ENCODE measurements at regions of chr15 and their contacts with region 1.

Region 1: DNA sequence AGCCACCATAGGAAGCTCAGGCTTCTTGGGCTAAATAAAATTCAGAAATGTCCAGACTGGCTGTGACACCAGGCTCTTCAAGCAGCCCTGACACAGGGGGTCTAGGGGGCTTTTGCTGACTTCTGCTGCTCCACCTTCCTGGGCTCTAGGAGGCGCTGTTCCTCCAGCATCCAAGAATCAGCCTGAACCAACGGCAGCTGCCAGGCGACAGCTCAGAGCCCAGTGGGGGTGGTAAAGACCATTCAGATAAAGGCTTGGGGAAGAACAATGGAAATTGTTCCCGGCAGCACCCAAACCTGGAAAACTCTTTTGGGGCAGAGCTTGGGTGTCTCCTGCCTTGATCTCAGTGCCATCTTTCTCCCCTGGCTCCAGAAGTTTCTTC is 21.6 kb upstream of the PSTPIP1 start:
- DNase-seq: peak; percentile 81
- ATAC-seq: peak; percentile 61
- H3K4me3 Mint-ChIP-seq: no peak overlapping the region
- H3K27ac Mint-ChIP-seq: peak overlapping the region; percentile 61
- H3K4me1 Mint-ChIP-seq: peaks cover 37% of the 10 kb centered on the region
- H3K27me3 Mint-ChIP-seq: no peaks in the 10 kb centered on the region

Region 2: GRCh38 chr15:76987926-76988860 is 14.8 kb after region 1 on chr15:
- CTCF ChIA-PET with region 1: interaction called, 82 read pairs
- POLR2A ChIA-PET with region 1: no interaction called
- DNase-seq: peak; percentile 74
- ATAC-seq: peak; percentile 72
- H3K4me3 Mint-ChIP-seq: peak overlapping the region; percentile 60
- H3K27ac Mint-ChIP-seq: peak overlapping the region; percentile 94
- H3K4me1 Mint-ChIP-seq: peaks cover 66% of the 10 kb centered on the region
- H3K27me3 Mint-ChIP-seq: no peaks in the 10 kb centered on the region

Region 3: GRCh38 chr15:77024271-77025082 is 51.1 kb after region 1 on chr15:
- CTCF ChIA-PET with region 1: interaction called, 159 read pairs
- POLR2A ChIA-PET with region 1: interaction called, 6 read pairs
- DNase-seq: peak; percentile 74
- ATAC-seq: peak; percentile 37
- H3K4me3 Mint-ChIP-seq: no peak overlapping the region
- H3K27ac Mint-ChIP-seq: peak overlapping the region; percentile 99
- H3K4me1 Mint-ChIP-seq: peaks cover 82% of the 10 kb centered on the region
- H3K27me3 Mint-ChIP-seq: no peaks in the 10 kb centered on the region

Region 4: GRCh38 chr15:77052556-77052955 is 79.2 kb after region 1 on chr15:
- CTCF ChIA-PET with region 1: interaction called, 13 read pairs
- POLR2A ChIA-PET with region 1: no interaction called
- DNase-seq: no peak
- ATAC-seq: no peak
- H3K4me3 Mint-ChIP-seq: no peak overlapping the region
- H3K27ac Mint-ChIP-seq: no peak overlapping the region
- H3K4me1 Mint-ChIP-seq: peaks cover 3% of the 10 kb centered on the region
- H3K27me3 Mint-ChIP-seq: no peaks in the 10 kb centered on the region

Region 5: GRCh38 chr15:77179541-77179998 is 206.2 kb after region 1 on chr15:
- CTCF ChIA-PET with region 1: interaction called, 11 read pairs
- POLR2A ChIA-PET with region 1: no interaction called
- DNase-seq: peak; percentile 61
- ATAC-seq: peak; percentile 87
- H3K4me3 Mint-ChIP-seq: peak overlapping the region; percentile 60
- H3K27ac Mint-ChIP-seq: peak overlapping the region; percentile 91
- H3K4me1 Mint-ChIP-seq: peaks cover 49% of the 10 kb centered on the region
- H3K27me3 Mint-ChIP-seq: no peaks in the 10 kb centered on the region